HEK293T (cell line): ENCODE measurements at regions of chr1 and their contacts with region 1.

Region 1: DNA sequence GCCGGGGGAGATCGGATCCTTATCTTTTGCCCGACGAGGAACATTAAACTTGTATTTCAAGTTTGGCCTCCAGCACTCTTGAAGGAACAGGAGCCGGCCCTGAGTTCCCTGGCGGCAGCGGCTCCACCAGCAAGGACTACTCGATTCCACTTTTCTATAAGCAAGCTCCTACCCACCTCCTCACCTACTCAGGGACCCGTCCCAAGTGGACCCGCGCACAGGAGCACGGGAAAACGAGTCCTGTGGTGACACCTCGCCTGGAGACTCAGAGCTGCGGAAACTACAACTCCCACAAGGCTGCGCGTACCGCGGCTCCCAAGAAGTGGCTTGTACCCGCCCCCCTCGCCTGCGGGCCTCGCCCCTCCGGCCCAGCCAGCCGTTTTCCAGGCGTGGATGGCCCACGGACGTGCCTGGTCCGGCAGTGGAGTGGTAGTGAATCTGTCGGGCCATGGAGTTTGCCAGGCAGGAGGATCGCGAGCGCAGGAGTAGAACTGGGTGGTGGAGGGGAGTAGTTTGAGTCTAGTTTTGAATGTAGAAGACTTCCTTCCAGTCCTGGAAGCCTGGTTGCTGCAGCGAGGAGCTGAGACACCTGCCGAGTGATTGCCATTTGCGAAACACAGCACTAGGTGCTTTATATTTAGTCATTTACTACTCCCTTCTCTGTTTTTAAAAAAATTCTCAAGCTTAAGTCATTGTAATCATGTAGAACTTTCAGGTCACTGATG is at the start of gene ACP6:
- DNase-seq: peak; percentile 95

Region 2: GRCh38 chr1:147541672-147542568 is 128.6 kb before region 1 on chr1:
- CTCF ChIA-PET with region 1: no interaction called
- POLR2A ChIA-PET with region 1: interaction called, 11 read pairs
- DNase-seq: peak; percentile 50

Region 3: DNA sequence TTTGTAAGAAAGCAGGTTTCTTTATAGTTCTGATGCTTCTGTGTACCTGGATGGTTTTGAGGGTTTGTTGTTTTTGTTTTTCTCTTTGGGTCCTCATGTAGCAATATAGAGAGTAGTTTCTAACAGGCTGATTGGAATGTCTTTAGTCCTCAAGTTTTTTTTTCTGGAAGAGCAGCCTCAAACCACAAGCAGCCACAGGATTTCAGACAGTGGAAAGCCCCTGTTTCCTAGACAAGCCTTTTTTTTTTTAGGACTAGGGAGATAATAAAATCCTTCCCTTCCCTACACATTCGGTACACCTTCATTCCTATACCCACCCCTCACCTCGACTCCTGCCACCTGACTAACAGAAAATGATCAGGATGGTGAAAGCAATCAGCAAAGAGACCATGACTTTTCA is 47.7 kb before region 1 on chr1:
- CTCF ChIA-PET with region 1: no interaction called
- POLR2A ChIA-PET with region 1: no interaction called
- DNase-seq: no peak